ENCODE measurements at regions of chr4 and their contacts with region 1.

Region 1: DNA sequence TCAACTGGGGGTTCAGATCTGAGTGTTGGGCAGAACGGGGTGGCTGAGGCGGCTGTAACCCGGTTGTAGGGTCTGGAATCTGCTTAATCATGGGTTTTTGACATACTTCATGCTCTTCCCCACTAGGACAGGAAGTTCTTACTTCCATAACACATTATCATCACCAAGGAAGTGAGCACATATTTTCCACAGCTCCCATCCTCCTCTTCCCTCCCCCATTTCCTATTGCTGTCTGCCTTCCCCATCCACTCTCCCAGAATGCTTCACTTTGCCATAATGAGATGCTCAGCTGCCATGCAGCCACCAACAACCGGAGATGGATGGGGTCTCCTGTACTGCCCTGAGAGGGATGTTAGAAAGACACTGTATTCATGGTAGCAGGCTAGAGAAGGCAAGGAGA is 6.4 kb upstream of the DCUN1D4 start:
- DNase-seq: peak in 1 of 2 donors; percentile 32
- H3K4me3 ChIP-seq: no peak overlapping the region
- H3K27ac ChIP-seq: no peak overlapping the region
- H3K4me1 ChIP-seq: peaks cover 0 to 2% (median 0%) of the 10 kb centered on the region in 4 donors
- H3K27me3 ChIP-seq: no peaks in the 10 kb centered on the region
- CTCF ChIP-seq: no peak
- EP300 ChIP-seq: no peak
- POLR2A ChIP-seq: no peak

Region 2: DNA sequence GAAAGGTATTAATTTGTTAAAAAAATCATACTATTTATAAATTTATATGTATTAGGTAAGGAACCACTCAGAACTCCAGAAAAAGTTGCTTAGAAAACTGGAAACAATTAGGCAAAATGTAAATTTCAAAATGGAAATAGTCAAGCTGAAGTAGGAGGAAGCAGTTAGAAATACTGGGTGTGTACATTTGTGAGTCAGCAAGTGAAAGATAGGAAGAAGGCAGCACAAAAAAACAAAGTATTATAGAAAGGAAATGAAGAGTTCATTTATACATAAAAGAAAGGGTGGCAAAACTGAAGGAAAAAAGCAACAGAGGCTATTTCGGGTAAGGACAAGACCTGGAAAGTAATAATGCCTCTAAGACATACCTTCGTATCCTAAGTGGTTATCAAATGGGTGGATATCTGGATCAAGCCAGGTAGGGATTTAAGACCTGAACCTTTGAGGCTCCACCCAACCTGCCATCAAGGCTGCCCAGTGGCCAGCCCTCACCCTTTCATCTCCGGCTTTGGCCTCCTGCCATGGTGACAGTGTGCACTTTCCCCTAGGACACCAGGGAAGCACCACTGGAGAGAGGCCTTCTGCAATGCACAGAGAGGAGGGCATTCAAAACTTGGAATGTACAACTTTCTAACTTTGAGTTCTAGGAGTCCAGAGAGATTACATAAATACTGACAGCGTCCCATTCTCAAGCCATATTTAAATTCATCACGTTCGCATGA is 183.5 kb after region 1 on chr4 and contains the start of gene LRRC66:
- intact Hi-C with region 1: loop called (anchors 5 kb)
- DNase-seq: peak; percentile 50 to 69
- H3K4me3 ChIP-seq: no peak within 1 kb of the TSS
- H3K27ac ChIP-seq: peak within 1 kb of the TSS; percentile 4 to 70 (median 51)
- H3K4me1 ChIP-seq: peaks cover 0 to 4% (median 0%) of the 10 kb centered on the region in 4 donors
- H3K27me3 ChIP-seq: no peaks in the 10 kb centered on the region
- CTCF ChIP-seq: no peak
- EP300 ChIP-seq: no peak
- POLR2A ChIP-seq: no peak
- total RNA-seq, gene LRRC66: 2.9 to 5.1 (median 3.6) TPM in 3 of 5 donors, not detected in the others

Measured in stomach (tissue), 19 donors.